Activated naive CD4-positive, alpha-beta T cell treated with anti-CD3 and anti-CD28 coated beads for 36 hours (primary cell): ENCODE measurements at regions of chr1 and their contacts with region 1.

Region 1: DNA sequence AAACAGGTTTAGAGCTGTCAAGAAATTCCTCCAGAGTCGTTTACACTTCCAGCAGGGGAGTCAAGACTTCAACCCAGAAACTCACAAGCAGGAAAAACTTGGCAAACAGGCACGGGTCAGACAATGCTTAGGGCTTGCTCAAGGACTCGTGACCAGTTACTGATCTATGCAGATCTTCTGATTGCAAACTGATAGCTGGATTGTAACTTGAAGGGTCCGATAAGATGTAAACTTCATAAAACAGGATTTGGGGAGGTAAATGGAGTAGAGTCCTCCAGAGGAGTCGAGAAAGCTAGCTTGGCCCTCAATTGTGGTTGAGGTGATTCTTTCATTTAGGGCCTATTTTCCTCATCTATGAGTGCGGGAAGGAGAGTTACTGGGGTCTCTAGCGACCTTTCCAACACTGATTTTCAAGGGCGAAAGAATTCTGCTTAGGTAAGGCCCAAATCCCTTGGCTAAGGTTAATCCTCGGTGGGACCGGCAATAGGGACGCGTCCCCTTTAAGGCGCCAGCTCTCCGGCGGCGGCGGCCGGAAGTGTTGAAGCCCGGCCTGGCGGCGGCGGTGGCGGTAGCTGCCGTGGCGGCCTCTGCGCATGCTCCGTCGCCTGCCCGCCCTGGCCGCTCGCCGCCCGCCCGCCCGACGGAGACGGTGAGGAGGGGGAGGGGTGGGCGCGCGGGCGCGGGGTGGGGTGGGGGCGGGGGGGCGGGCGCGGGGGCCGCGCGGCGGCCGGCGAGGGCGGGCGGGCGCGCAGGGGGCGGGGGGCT is at the start of gene GMEB1:
- DNase-seq: peak; percentile 87
- H3K4me3 Mint-ChIP-seq: peak within 1 kb of the TSS; percentile 86
- H3K27ac Mint-ChIP-seq: peak within 1 kb of the TSS; percentile 96
- H3K4me1 Mint-ChIP-seq: peaks cover 11% of the 10 kb centered on the region
- H3K27me3 Mint-ChIP-seq: no peaks in the 10 kb centered on the region
- total RNA-seq, gene GMEB1: 15.8 to 16.3 TPM

Region 2: GRCh38 chr1:28736450-28737306 is 68.3 kb after region 1 on chr1 and contains the start of gene YTHDF2:
- CTCF ChIA-PET with region 1: interaction called, 6 read pairs
- intact Hi-C with region 1: loop called (anchors 1 kb)
- DNase-seq: peak; percentile 99
- H3K4me3 Mint-ChIP-seq: peak within 1 kb of the TSS; percentile 96
- H3K27ac Mint-ChIP-seq: peak within 1 kb of the TSS; percentile 92
- H3K4me1 Mint-ChIP-seq: peaks cover 33% of the 10 kb centered on the region
- H3K27me3 Mint-ChIP-seq: no peaks in the 10 kb centered on the region
- total RNA-seq, gene YTHDF2: 64.9 to 66.1 TPM